ENCODE measurements at regions of chr12 and their contacts with region 1.

Region 1: GRCh38 chr12:6423267-6424007 is 21.3 kb upstream of the CD27 start:
- DNase-seq: no peak
- ATAC-seq: peak; percentile 70
- H3K4me3 ChIP-seq: no peak overlapping the region
- H3K27ac ChIP-seq: peak overlapping the region; percentile 61
- H3K4me1 ChIP-seq: peaks cover 44% of the 10 kb centered on the region
- H3K27me3 ChIP-seq: no peaks in the 10 kb centered on the region; a peak in 1 of 4 replicates
- CTCF ChIP-seq: peak; percentile 80 to 95 (median 87); a peak in 5 of 6 replicates
- EP300 ChIP-seq: peak in 1 of 2 experiments; percentile 31; a peak in 1 of 4 replicates
- POLR2A ChIP-seq: no peak
- RAD21 ChIP-seq: peak; percentile 97

Region 2: GRCh38 chr12:6335451-6336078 is 87.9 kb before region 1 on chr12:
- CTCF ChIA-PET with region 1: interaction called, 53 read pairs
- POLR2A ChIA-PET with region 1: interaction called, 9 read pairs
- RAD21 ChIA-PET with region 1: interaction called, 38 read pairs
- SMC1A ChIA-PET with region 1: interaction called, 32 read pairs
- in situ Hi-C with region 1: no loop called
- intact Hi-C with region 1: loop called (anchors 5 kb)
- DNase-seq: peak; percentile 60
- ATAC-seq: peak; percentile 85
- H3K4me3 ChIP-seq: peak overlapping the region; percentile 53
- H3K27ac ChIP-seq: peak overlapping the region; percentile 93
- H3K4me1 ChIP-seq: peaks cover 45% of the 10 kb centered on the region
- H3K27me3 ChIP-seq: no peaks in the 10 kb centered on the region
- CTCF ChIP-seq: peak; percentile 71 to 92 (median 76)
- EP300 ChIP-seq: no peak; a peak in 1 of 4 replicates
- POLR2A ChIP-seq: peak; percentile 83
- RAD21 ChIP-seq: peak; percentile 75

Region 3: GRCh38 chr12:6443361-6443983 is 20.0 kb after region 1 on chr12:
- CTCF ChIA-PET with region 1: interaction called, 37 read pairs
- POLR2A ChIA-PET with region 1: interaction called, 126 read pairs
- RAD21 ChIA-PET with region 1: interaction called, 126 read pairs
- SMC1A ChIA-PET with region 1: interaction called, 147 read pairs
- in situ Hi-C with region 1: no loop called
- intact Hi-C with region 1: loop called (anchors 1 kb)
- DNase-seq: no peak
- ATAC-seq: peak; percentile 47
- H3K4me3 ChIP-seq: peak overlapping the region; percentile 66
- H3K27ac ChIP-seq: peak overlapping the region; percentile 99
- H3K4me1 ChIP-seq: peaks cover 46% of the 10 kb centered on the region
- H3K27me3 ChIP-seq: no peaks in the 10 kb centered on the region
- CTCF ChIP-seq: no peak
- EP300 ChIP-seq: peak in 1 of 2 experiments; percentile 75; a peak in 2 of 4 replicates
- POLR2A ChIP-seq: peak; percentile 68
- RAD21 ChIP-seq: no peak

Region 4: GRCh38 chr12:6461401-6462233 is 38.2 kb after region 1 on chr12:
- CTCF ChIA-PET with region 1: interaction called, 240 read pairs
- POLR2A ChIA-PET with region 1: interaction called, 134 read pairs
- RAD21 ChIA-PET with region 1: interaction called, 151 read pairs
- SMC1A ChIA-PET with region 1: interaction called, 211 read pairs
- in situ Hi-C with region 1: loop called (anchors 5 kb)
- intact Hi-C with region 1: loop called (anchors 1 kb)
- DNase-seq: peak; percentile 95
- ATAC-seq: peak; percentile 92
- H3K4me3 ChIP-seq: peak overlapping the region; percentile 33; the same call in 1 of the 2 replicates
- H3K27ac ChIP-seq: peak overlapping the region; percentile 89
- H3K4me1 ChIP-seq: peaks cover 51% of the 10 kb centered on the region
- H3K27me3 ChIP-seq: no peaks in the 10 kb centered on the region
- CTCF ChIP-seq: no peak
- EP300 ChIP-seq: peak; percentile 63 to 88; a peak in 3 of 4 replicates
- POLR2A ChIP-seq: peak; percentile 72
- RAD21 ChIP-seq: no peak

Region 5: GRCh38 chr12:6533923-6534694 is 110.7 kb after region 1 on chr12 and contains the start of gene GAPDH:
- CTCF ChIA-PET with region 1: interaction called, 91 read pairs
- POLR2A ChIA-PET with region 1: interaction called, 19 read pairs
- RAD21 ChIA-PET with region 1: interaction called, 67 read pairs
- SMC1A ChIA-PET with region 1: interaction called, 83 read pairs
- in situ Hi-C with region 1: loop called (anchors 5 kb)
- intact Hi-C with region 1: loop called (anchors 1 kb)
- DNase-seq: peak; percentile 80
- ATAC-seq: peak; percentile 76
- H3K4me3 ChIP-seq: peak within 1 kb of the TSS; percentile 83
- H3K27ac ChIP-seq: peak within 1 kb of the TSS; percentile 98
- H3K4me1 ChIP-seq: peaks cover 29% of the 10 kb centered on the region
- H3K27me3 ChIP-seq: no peaks in the 10 kb centered on the region
- CTCF ChIP-seq: no peak
- EP300 ChIP-seq: peak in 1 of 2 experiments; percentile 50; a peak in 1 of 4 replicates
- POLR2A ChIP-seq: peak; percentile 96
- RAD21 ChIP-seq: no peak
- polyA plus RNA-seq, gene GAPDH: 9,323 to 11,518 TPM

Region 6: DNA sequence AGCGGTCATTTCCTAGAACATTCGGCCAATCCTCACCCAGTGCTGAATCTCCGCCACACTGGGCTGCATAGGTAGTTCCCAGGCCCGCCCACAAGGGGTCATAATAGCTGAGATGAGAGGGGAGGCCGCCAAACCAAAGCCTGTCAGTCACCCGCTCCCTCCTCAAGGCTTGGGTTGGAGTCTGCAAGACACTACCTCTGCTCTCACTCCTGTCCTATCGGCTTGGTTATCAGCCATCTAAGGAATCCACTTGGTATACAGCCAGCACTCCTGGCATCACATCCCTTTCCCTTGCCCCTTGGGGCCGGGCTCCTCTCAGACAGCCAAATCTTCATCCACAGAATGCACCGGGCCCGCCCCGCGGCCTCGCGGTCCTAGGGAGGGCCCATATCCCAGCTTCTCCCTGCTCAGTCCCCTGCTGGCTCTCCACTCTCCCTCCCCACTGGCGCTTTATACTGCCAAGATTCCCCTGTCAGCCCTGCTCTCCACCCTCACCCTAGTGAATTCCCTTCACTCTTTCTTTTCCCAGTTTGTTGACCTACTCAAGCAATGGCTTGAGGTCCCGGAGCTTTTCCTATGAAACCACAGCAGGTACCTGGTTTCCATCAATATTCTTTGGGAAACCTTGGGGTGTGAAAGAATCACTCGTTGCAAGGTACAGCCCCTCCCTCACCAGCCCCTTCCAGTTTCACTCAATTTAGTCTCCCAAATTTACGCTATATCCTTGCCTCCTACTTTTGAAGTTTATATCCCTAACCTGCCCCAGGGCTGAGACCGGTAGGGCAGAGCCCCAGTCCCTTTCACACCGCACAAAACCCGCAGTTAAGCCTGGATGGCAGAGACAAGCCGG is 131.0 kb after region 1 on chr12:
- CTCF ChIA-PET with region 1: interaction called, 35 read pairs
- POLR2A ChIA-PET with region 1: no interaction called
- RAD21 ChIA-PET with region 1: interaction called, 6 read pairs
- SMC1A ChIA-PET with region 1: interaction called, 24 read pairs
- in situ Hi-C with region 1: no loop called
- intact Hi-C with region 1: loop called (anchors 1 kb)
- DNase-seq: no peak
- ATAC-seq: peak; percentile 83
- H3K4me3 ChIP-seq: peak overlapping the region; percentile 89
- H3K27ac ChIP-seq: peak overlapping the region; percentile 27
- H3K4me1 ChIP-seq: peaks cover 10% of the 10 kb centered on the region
- H3K27me3 ChIP-seq: no peaks in the 10 kb centered on the region
- CTCF ChIP-seq: peak; percentile 80 to 85 (median 84)
- EP300 ChIP-seq: no peak
- POLR2A ChIP-seq: no peak
- RAD21 ChIP-seq: peak; percentile 48

Region 7: GRCh38 chr12:6653987-6654386 is 230.6 kb after region 1 on chr12:
- CTCF ChIA-PET with region 1: no interaction called
- POLR2A ChIA-PET with region 1: no interaction called
- RAD21 ChIA-PET with region 1: no interaction called
- SMC1A ChIA-PET with region 1: no interaction called
- in situ Hi-C with region 1: no loop called
- intact Hi-C with region 1: no loop called
- DNase-seq: no peak
- ATAC-seq: no peak
- H3K4me3 ChIP-seq: no peak overlapping the region
- H3K27ac ChIP-seq: no peak overlapping the region
- H3K4me1 ChIP-seq: no peaks in the 10 kb centered on the region
- H3K27me3 ChIP-seq: no peaks in the 10 kb centered on the region
- CTCF ChIP-seq: no peak
- EP300 ChIP-seq: no peak
- POLR2A ChIP-seq: no peak
- RAD21 ChIP-seq: no peak